Activated CD8-positive, alpha-beta memory T cell treated with anti-CD3 and anti-CD28 coated beads, Interleukin-2, amount 10 ng/mL, durations not matched to agents 7 days and 5 days (primary cell): ENCODE measurements at regions of chr6 and their contacts with region 1.

Region 1: DNA sequence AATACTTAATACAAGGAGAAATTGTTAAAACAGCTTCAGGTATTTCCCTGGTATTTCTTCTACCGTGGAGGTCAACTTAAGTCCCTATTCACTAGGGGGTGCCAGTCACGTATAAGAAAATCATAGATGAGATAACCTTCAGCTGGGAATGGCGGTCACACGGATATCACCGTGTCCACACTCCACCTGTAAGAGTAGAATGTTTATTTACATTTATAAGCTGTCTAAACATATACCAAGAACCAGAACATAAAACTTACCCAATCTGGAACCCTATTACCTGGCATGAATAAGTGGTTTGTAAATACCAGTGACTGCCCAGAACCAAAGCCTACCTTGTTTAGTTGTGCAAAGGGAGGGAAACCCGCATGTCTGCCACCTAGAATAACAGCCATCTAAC is 1.9 kb upstream of the ELOVL4 start:
- DNase-seq: peak; percentile 76
- ATAC-seq: peak; percentile 42
- H3K4me3 Mint-ChIP-seq: peak overlapping the region; percentile 7
- H3K27ac Mint-ChIP-seq: no peak overlapping the region
- H3K4me1 Mint-ChIP-seq: peaks cover 25% of the 10 kb centered on the region
- H3K27me3 Mint-ChIP-seq: peaks cover 34% of the 10 kb centered on the region

Region 2: DNA sequence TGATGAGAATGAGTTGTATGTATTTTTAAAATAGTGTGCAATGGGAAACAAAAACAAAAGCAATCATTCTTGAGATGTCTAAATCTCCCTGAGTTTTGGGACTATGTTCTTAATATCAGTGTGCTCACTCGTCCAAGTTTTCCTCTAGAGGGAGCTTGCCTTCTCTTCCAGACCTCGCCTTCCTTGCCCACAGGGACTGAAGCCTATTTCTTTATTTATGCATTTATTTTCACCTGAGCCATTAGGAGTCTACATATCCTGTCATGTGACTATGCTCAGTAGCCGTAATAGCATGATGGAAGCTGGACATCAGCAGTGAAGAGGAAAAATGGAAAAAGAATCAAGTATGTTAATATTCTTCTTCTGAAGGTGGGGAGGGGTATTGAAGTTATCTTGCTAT is 186.9 kb before region 1 on chr6:
- CTCF ChIA-PET with region 1: no interaction called
- DNase-seq: no peak
- ATAC-seq: no peak
- H3K4me3 Mint-ChIP-seq: no peak overlapping the region
- H3K27ac Mint-ChIP-seq: no peak overlapping the region
- H3K4me1 Mint-ChIP-seq: no peaks in the 10 kb centered on the region
- H3K27me3 Mint-ChIP-seq: peaks cover 7% of the 10 kb centered on the region

Region 3: DNA sequence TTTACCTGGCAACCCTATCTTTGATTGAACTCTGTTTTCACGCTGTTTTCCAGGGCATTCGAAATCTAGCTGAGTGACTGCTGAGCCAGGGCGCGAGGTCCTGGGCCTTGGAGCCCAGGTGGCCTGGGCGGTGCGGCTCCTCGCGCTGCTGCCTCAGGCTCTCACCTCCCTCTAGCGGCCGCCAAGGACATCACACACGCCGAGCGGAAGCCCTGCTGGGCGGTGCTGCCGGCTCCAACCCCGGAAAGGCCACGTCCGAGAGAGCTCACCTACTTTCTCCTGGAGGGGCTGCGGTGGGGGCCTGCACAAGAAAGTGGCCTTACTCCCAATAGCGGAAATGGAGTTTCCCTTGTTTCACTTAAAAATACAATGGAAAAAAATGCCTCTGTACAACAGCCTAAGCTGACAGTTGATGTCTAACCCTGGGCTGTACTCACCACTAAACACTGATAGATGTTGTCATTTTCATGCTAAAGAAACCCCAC is 79.6 kb before region 1 on chr6:
- CTCF ChIA-PET with region 1: interaction called, 14 read pairs
- DNase-seq: peak; percentile 88
- ATAC-seq: peak; percentile 100
- H3K4me3 Mint-ChIP-seq: peak overlapping the region; percentile 23
- H3K27ac Mint-ChIP-seq: peak overlapping the region; percentile 62
- H3K4me1 Mint-ChIP-seq: peaks cover 14% of the 10 kb centered on the region
- H3K27me3 Mint-ChIP-seq: peaks cover 21% of the 10 kb centered on the region

Region 4: GRCh38 chr6:79888587-79888986 is 60.6 kb before region 1 on chr6:
- CTCF ChIA-PET with region 1: no interaction called
- DNase-seq: no peak
- ATAC-seq: no peak
- H3K4me3 Mint-ChIP-seq: no peak overlapping the region
- H3K27ac Mint-ChIP-seq: no peak overlapping the region
- H3K4me1 Mint-ChIP-seq: no peaks in the 10 kb centered on the region
- H3K27me3 Mint-ChIP-seq: peaks cover 48% of the 10 kb centered on the region

Region 5: DNA sequence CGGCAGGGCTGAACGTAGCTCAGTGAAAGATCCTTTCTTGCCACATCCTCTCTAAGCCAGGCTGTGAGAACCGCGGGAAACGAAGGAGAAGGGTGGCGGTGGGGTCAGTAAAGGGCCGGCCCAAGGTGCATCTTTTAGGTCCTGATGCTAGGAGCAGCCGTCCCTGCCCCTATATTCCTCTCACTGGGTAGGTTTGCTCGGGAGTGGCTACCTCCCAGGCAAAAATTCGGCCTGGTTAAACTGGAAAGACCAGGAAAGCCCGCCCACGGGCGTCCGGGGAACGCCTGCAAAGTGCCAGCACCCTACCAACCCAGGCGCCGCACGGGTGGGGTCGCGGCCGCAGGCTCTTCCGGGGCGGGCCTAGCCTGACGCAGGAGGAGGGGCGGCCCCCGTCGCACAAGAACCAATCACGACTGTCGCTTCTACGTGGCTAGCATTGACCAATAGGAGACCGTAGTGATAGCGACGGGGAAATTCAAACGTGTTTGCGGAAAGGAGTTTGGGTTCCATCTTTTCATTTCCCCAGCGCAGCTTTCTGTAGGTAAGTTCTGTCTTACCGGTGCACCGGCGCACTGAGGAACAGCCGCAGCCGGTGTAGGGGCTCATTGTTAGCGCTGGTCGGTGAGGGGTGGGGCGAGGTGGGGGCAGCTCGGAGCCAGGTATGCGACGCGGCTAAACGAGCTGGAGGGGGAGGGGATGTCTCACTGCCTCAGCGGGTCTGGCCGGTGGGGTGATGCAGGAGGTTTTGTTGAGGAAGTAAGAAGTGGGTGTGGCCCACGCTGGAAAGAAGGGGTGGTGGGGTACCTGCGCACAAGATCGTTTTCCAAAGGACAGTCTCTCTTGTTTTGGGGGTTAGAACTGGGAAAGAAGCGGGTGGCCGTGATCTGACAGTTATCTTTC is 55.2 kb after region 1 on chr6 and contains the start of gene TTK:
- CTCF ChIA-PET with region 1: interaction called, 14 read pairs
- DNase-seq: peak; percentile 95
- ATAC-seq: peak; percentile 98
- H3K4me3 Mint-ChIP-seq: peak within 1 kb of the TSS; percentile 89
- H3K27ac Mint-ChIP-seq: peak within 1 kb of the TSS; percentile 96
- H3K4me1 Mint-ChIP-seq: peaks cover 46% of the 10 kb centered on the region
- H3K27me3 Mint-ChIP-seq: peaks cover 3% of the 10 kb centered on the region
- total RNA-seq, gene TTK: 36.7 to 40.1 TPM

Region 6: GRCh38 chr6:80088637-80089036 is 139.4 kb after region 1 on chr6:
- CTCF ChIA-PET with region 1: interaction called, 44 read pairs
- DNase-seq: no peak
- ATAC-seq: no peak
- H3K4me3 Mint-ChIP-seq: no peak overlapping the region
- H3K27ac Mint-ChIP-seq: no peak overlapping the region
- H3K4me1 Mint-ChIP-seq: no peaks in the 10 kb centered on the region
- H3K27me3 Mint-ChIP-seq: peaks cover 25% of the 10 kb centered on the region

Region 7: GRCh38 chr6:80094017-80094416 is 144.8 kb after region 1 on chr6:
- CTCF ChIA-PET with region 1: interaction called, 44 read pairs
- DNase-seq: no peak
- ATAC-seq: no peak
- H3K4me3 Mint-ChIP-seq: no peak overlapping the region
- H3K27ac Mint-ChIP-seq: no peak overlapping the region
- H3K4me1 Mint-ChIP-seq: peaks cover 4% of the 10 kb centered on the region
- H3K27me3 Mint-ChIP-seq: peaks cover 16% of the 10 kb centered on the region